Esophagus muscularis mucosa (tissue), 4 donors: ENCODE measurements at regions of chr15 and their contacts with region 1.

Region 1: DNA sequence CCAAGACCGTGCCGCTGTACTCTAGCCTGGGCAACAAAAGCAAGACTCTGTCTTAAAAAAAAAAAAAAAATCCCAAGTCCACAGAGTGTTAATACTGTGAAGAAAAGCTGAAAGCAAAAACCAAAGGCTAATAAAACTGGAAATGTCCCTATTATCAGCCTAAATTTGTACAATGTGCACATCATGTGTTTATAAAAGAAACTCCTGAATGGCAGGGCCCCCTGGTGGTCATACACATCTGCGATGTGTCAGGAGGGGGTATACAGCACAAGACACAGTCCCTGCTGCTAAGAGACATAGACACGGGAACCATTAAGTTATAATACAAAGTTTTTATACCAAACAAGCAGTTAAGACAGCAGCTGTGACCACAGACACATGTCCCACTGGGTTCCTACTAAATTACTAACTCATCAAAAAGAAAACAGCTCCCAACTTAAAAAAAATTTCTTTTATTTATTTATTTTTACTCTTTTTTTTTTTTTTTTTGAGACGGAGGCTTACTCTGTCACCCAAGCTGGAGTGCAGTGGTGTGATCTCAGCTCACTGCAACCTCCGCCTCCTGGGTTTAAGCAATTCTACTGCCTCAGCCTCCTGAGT is 31.0 kb downstream of the IDH2 start:
- DNase-seq: no peak
- H3K4me3 ChIP-seq: no peak overlapping the region
- H3K27ac ChIP-seq: peak overlapping the region; percentile 11 to 55 (median 41)
- H3K4me1 ChIP-seq: peaks cover 5 to 32% (median 28%) of the 10 kb centered on the region in 4 donors
- H3K27me3 ChIP-seq: no peaks in the 10 kb centered on the region
- CTCF ChIP-seq: peak; percentile 74 to 82 (median 77)
- EP300 ChIP-seq: no peak
- POLR2A ChIP-seq: no peak

Region 2: GRCh38 chr15:89750560-89751542 is 320.5 kb before region 1 on chr15 and contains the start of gene MESP1:
- intact Hi-C with region 1: loop called (anchors 5 kb)
- DNase-seq: peak; percentile 95
- H3K4me3 ChIP-seq: peak within 1 kb of the TSS; percentile 61 to 88 (median 64)
- H3K27ac ChIP-seq: peak within 1 kb of the TSS; percentile 73 to 77 (median 74)
- H3K4me1 ChIP-seq: peaks cover 15 to 18% (median 17%) of the 10 kb centered on the region in 4 donors
- H3K27me3 ChIP-seq: peaks cover 0 to 14% (median 0%) of the 10 kb centered on the region in 4 donors
- CTCF ChIP-seq: peak; percentile 58 to 90 (median 67)
- EP300 ChIP-seq: no peak
- POLR2A ChIP-seq: no peak
- total RNA-seq, gene MESP1: 0.50 to 2.8 (median 1.7) TPM

Region 3: GRCh38 chr15:89845305-89845893 is 225.9 kb before region 1 on chr15:
- intact Hi-C with region 1: no loop called
- DNase-seq: no peak
- H3K4me3 ChIP-seq: no peak overlapping the region
- H3K27ac ChIP-seq: peak overlapping the region in 1 of 4 donors; percentile 18
- H3K4me1 ChIP-seq: peaks cover 0 to 14% (median 3%) of the 10 kb centered on the region in 4 donors
- H3K27me3 ChIP-seq: no peaks in the 10 kb centered on the region
- CTCF ChIP-seq: no peak
- EP300 ChIP-seq: no peak
- POLR2A ChIP-seq: no peak

Region 4: GRCh38 chr15:89893696-89894455 is 177.4 kb before region 1 on chr15 and contains the start of gene AP3S2:
- intact Hi-C with region 1: loop called (anchors 5 kb)
- DNase-seq: peak; percentile 98
- H3K4me3 ChIP-seq: peak within 1 kb of the TSS; percentile 87 to 93 (median 90)
- H3K27ac ChIP-seq: peak within 1 kb of the TSS; percentile 91 to 94 (median 92)
- H3K4me1 ChIP-seq: peaks cover 14 to 28% (median 20%) of the 10 kb centered on the region in 4 donors
- H3K27me3 ChIP-seq: no peaks in the 10 kb centered on the region
- CTCF ChIP-seq: peak in 2 of 3 experiments; percentile 7 to 22
- EP300 ChIP-seq: no peak
- POLR2A ChIP-seq: peak; percentile 8
- total RNA-seq, gene AP3S2: 26.8 to 43.2 (median 37.3) TPM

Region 5: GRCh38 chr15:89912674-89913396 is 158.5 kb before region 1 on chr15 and contains the start of gene ARPIN:
- intact Hi-C with region 1: loop called (anchors 5 kb)
- DNase-seq: no peak
- H3K4me3 ChIP-seq: peak within 1 kb of the TSS; percentile 87 to 98 (median 92)
- H3K27ac ChIP-seq: peak within 1 kb of the TSS; percentile 81 to 88 (median 86)
- H3K4me1 ChIP-seq: peaks cover 13 to 27% (median 25%) of the 10 kb centered on the region in 4 donors
- H3K27me3 ChIP-seq: no peaks in the 10 kb centered on the region
- CTCF ChIP-seq: peak in 1 of 3 experiments; percentile 8
- EP300 ChIP-seq: no peak
- POLR2A ChIP-seq: no peak
- total RNA-seq, gene ARPIN: 19.9 to 26.6 (median 25.4) TPM

Region 6: DNA sequence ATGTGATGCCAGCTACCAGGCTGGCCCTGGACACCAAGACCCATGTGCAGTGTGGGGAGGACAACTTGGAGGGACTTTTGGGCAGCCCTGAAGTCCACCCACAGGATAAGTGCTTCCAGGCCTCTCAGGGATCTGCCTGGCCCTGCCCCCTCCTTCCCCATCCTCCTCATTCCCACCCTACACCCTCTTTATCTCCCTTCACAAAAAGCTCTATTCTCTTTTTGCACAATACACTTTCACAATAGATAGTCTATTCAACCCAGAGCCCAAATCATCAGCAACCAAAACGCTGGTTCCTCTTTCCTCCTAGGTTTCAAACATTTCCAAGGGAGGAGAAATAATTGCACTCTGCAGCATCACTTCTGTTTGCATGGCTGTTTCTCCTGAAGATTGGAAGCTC is 78.0 kb before region 1 on chr15:
- intact Hi-C with region 1: no loop called
- DNase-seq: no peak
- H3K4me3 ChIP-seq: no peak overlapping the region
- H3K27ac ChIP-seq: no peak overlapping the region
- H3K4me1 ChIP-seq: no peaks in the 10 kb centered on the region
- H3K27me3 ChIP-seq: no peaks in the 10 kb centered on the region
- CTCF ChIP-seq: no peak
- EP300 ChIP-seq: no peak
- POLR2A ChIP-seq: no peak

Region 7: DNA sequence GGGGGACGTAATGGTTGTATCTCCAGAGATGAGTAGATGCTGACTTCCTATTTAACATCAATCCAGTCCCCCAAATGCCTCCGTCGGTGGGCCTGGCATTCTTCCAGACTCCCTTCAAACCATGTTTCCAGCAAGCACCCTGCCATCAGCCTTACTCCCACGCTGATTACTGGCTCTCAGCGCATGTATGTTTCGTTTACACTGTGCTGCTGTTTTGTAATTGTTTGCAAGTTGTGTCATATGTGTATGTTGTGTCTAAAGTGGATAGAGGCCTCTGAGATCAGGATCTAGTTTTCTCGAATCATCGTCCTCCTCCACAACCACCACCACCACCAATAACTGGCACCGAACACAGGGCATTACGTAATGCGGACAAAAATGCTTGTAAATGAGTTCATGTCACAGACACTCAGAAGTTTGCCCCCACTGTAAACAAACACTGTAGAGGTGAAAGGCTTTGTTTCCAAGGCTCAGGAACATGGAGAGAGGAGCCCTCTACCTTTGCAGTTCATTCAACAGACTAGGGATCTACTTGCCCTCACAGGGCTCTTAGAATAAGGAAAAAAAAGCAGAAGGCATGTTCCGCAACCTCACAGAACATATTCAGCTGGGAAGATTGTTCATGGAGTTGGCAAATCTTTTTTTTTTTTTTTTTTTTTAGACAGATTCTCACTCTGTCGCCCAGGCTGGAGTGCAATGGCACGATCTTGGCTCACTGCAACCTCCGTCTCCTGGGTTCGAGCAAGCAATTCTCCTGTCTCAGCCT is 83.7 kb after region 1 on chr15:
- intact Hi-C with region 1: no loop called
- DNase-seq: no peak
- H3K4me3 ChIP-seq: no peak overlapping the region
- H3K27ac ChIP-seq: peak overlapping the region; percentile 55 to 75 (median 68)
- H3K4me1 ChIP-seq: peaks cover 19 to 67% (median 60%) of the 10 kb centered on the region in 4 donors
- H3K27me3 ChIP-seq: no peaks in the 10 kb centered on the region
- CTCF ChIP-seq: peak in 2 of 3 experiments; percentile 35 to 47
- EP300 ChIP-seq: no peak
- POLR2A ChIP-seq: no peak

Region 8: GRCh38 chr15:90174140-90174875 is 103.0 kb after region 1 on chr15:
- intact Hi-C with region 1: no loop called
- DNase-seq: peak; percentile 95
- H3K4me3 ChIP-seq: peak overlapping the region; percentile 2 to 30 (median 26)
- H3K27ac ChIP-seq: peak overlapping the region; percentile 86 to 93 (median 90)
- H3K4me1 ChIP-seq: peaks cover 22 to 38% (median 33%) of the 10 kb centered on the region in 4 donors
- H3K27me3 ChIP-seq: no peaks in the 10 kb centered on the region
- CTCF ChIP-seq: no peak
- EP300 ChIP-seq: peak; percentile 92
- POLR2A ChIP-seq: no peak